Right lobe of liver (tissue), 6 donors: ENCODE measurements at regions of chr4 and their contacts with region 1.

Region 1: DNA sequence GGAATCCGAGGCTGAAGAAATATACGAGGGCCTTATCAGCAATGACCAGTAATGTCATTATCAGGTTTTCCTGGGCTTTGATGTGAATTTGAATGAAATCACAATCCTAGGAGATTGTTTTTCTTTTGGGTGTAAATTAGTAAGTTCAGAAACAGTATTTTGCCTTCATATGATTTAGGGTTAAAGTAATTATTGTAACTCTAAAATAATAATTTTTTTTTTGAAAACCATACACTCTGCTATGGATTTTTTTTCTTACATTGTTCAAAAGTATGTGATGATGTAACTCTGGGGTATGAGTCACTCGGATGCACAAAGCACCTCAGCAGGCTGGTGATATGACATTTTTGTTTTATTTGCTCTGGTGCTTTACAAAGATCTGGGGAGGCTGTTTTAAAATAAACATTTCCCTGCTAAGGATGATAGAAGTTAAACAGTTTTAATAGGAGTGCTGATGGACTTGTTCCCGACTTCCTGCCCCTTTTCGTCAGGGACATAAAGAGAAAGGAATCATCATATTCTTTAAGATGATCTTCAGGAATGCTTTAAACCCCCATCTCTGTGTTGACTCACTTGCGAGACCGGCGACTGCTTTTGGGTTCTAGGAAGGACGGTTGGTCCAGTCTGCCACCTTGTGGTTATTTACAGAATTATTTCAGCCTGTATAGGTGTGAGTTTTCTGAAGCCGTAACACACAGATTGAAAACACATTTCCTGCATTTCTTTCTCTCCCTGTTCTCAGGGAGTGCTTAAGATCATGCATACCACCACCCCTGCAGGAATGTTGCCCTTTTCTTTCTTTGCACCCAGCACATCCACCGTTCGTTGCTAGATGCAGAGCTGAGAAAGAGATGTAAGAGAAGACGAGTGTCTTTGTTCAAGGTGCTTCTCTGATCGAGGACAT is 72.5 kb downstream of the RAPGEF2 start:
- DNase-seq: peak in 2 of 3 donors; percentile 46 to 64
- ATAC-seq: peak; percentile 88 to 94 (median 90)
- H3K4me3 ChIP-seq: no peak overlapping the region
- H3K27ac ChIP-seq: peak overlapping the region in 1 of 3 donors; percentile 26
- H3K4me1 ChIP-seq: peaks cover 0 to 23% (median 9%) of the 10 kb centered on the region in 4 donors
- H3K27me3 ChIP-seq: no peaks in the 10 kb centered on the region
- CTCF ChIP-seq: peak; percentile 75 to 92 (median 80)
- POLR2A ChIP-seq: no peak

Region 2: GRCh38 chr4:158856852-158857251 is 318.5 kb before region 1 on chr4:
- intact Hi-C with region 1: loop called in 1 of 2 experiments (anchors 5 kb)
- DNase-seq: no peak
- ATAC-seq: peak; percentile 72 to 89 (median 82)
- H3K4me3 ChIP-seq: no peak overlapping the region
- H3K27ac ChIP-seq: no peak overlapping the region
- H3K4me1 ChIP-seq: peaks cover 0 to 7% (median 0%) of the 10 kb centered on the region in 4 donors
- H3K27me3 ChIP-seq: no peaks in the 10 kb centered on the region
- CTCF ChIP-seq: peak; percentile 58 to 70 (median 62)
- POLR2A ChIP-seq: no peak

Region 3: DNA sequence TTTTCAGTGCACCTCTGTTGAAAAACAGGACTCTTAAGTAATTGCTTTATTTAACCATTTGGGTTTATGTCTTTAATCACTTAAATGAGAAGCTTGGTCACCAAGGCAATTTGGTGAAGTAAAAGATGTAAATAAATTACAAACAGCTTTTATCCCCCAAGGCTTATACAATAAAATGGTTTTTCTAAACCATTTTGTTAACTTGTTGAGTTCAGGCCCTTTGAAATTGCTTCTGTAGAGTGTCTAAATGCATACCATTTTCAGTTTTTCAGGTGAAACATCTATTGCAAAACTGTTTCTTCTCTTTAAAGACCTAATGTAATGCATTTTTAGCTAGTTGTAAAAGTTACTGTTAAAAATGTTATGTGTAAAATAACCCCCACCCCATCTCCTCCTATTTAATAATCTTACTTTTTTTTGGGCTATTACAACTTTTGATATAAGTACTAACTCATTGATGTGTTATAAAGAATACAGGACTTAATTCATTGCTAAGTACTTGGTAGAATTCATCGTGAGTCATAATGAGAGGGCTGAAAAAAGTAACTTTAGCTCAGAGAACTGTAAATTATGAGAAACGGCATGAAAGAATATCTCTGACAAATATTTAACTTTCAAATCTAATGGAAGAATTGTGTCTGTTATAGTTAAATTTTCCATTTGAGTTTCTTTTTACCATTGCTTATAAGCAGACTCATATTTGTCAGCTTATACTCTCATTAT is 68.0 kb before region 1 on chr4:
- intact Hi-C with region 1: no loop called
- DNase-seq: no peak
- ATAC-seq: no peak
- H3K4me3 ChIP-seq: no peak overlapping the region
- H3K27ac ChIP-seq: no peak overlapping the region
- H3K4me1 ChIP-seq: peaks cover 0 to 21% (median 9%) of the 10 kb centered on the region in 4 donors
- H3K27me3 ChIP-seq: no peaks in the 10 kb centered on the region
- CTCF ChIP-seq: no peak
- POLR2A ChIP-seq: no peak